Activated naive CD4-positive, alpha-beta T cell treated with anti-CD3 and anti-CD28 coated beads for 36 hours (primary cell): ENCODE measurements at regions of chr17 and their contacts with region 1.

Region 1: GRCh38 chr17:7614422-7615264 is at the start of gene FXR2:
- DNase-seq: peak; percentile 100
- H3K4me3 Mint-ChIP-seq: peak within 1 kb of the TSS; percentile 83
- H3K27ac Mint-ChIP-seq: peak within 1 kb of the TSS; percentile 84
- H3K4me1 Mint-ChIP-seq: peaks cover 32% of the 10 kb centered on the region
- H3K27me3 Mint-ChIP-seq: no peaks in the 10 kb centered on the region
- total RNA-seq, gene FXR2: 29.7 to 36.8 TPM

Region 2: GRCh38 chr17:7403977-7404736 is 210.5 kb before region 1 on chr17 and contains the start of gene TMEM256:
- CTCF ChIA-PET with region 1: no interaction called
- intact Hi-C with region 1: loop called (anchors 1 kb)
- DNase-seq: peak; percentile 99
- H3K4me3 Mint-ChIP-seq: peak within 1 kb of the TSS; percentile 93
- H3K27ac Mint-ChIP-seq: peak within 1 kb of the TSS; percentile 93
- H3K4me1 Mint-ChIP-seq: peaks cover 19% of the 10 kb centered on the region
- H3K27me3 Mint-ChIP-seq: peaks cover 2% of the 10 kb centered on the region
- total RNA-seq, gene TMEM256: 65.6 to 66.3 TPM

Region 3: GRCh38 chr17:7454980-7455379 is 159.7 kb before region 1 on chr17:
- CTCF ChIA-PET with region 1: no interaction called
- intact Hi-C with region 1: loop called (anchors 1 kb)
- DNase-seq: no peak
- H3K4me3 Mint-ChIP-seq: peak overlapping the region; percentile 84
- H3K27ac Mint-ChIP-seq: peak overlapping the region; percentile 83
- H3K4me1 Mint-ChIP-seq: peaks cover 17% of the 10 kb centered on the region
- H3K27me3 Mint-ChIP-seq: no peaks in the 10 kb centered on the region

Region 4: GRCh38 chr17:7583253-7584109 is 31.2 kb before region 1 on chr17 and contains the start of gene MPDU1:
- CTCF ChIA-PET with region 1: interaction called, 8 read pairs
- intact Hi-C with region 1: loop called (anchors 1 kb)
- DNase-seq: peak; percentile 96
- H3K4me3 Mint-ChIP-seq: peak within 1 kb of the TSS; percentile 95
- H3K27ac Mint-ChIP-seq: peak within 1 kb of the TSS; percentile 100
- H3K4me1 Mint-ChIP-seq: peaks cover 58% of the 10 kb centered on the region
- H3K27me3 Mint-ChIP-seq: no peaks in the 10 kb centered on the region
- total RNA-seq, gene MPDU1: 48.8 to 53.5 TPM

Region 5: GRCh38 chr17:7627250-7628121 is 12.8 kb after region 1 on chr17 and contains the start of gene SAT2:
- CTCF ChIA-PET with region 1: interaction called, 9 read pairs
- intact Hi-C with region 1: loop called (anchors 1 kb)
- DNase-seq: peak; percentile 86
- H3K4me3 Mint-ChIP-seq: peak within 1 kb of the TSS; percentile 88
- H3K27ac Mint-ChIP-seq: peak within 1 kb of the TSS; percentile 30
- H3K4me1 Mint-ChIP-seq: peaks cover 7% of the 10 kb centered on the region
- H3K27me3 Mint-ChIP-seq: no peaks in the 10 kb centered on the region
- total RNA-seq, gene SAT2: 14.3 to 16.9 TPM

Region 6: DNA sequence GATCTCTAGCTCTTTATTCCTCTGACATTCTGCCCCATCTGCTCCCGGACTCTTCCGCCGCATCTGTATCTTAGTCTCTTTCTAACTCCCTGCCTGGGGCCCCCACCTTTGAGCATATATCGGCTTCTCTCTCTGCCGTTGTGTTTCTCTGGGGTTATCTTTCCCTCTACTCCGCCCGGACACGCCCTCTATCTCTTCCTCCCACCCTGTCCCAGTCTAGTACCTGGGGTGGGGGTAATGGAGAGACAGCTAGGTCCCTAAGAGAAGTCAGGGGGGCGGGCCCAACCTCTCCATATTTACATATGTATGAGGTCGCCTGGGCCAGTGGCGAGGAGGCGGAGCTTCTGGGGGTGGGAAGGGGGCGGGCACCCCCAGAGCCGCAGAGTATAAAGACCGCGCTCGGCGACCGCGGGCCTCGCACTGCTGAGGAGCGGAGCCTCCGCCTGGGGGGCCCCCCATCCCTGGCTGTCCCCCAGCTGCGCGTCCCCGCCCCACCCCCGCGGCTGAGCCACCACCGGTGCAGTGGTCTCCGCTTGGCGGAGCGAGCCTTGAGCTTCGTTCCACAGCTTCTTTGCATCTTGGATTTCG is 36.0 kb after region 1 on chr17 and contains the start of gene ATP1B2:
- CTCF ChIA-PET with region 1: no interaction called
- intact Hi-C with region 1: loop called (anchors 1 kb)
- DNase-seq: peak; percentile 78
- H3K4me3 Mint-ChIP-seq: peak within 1 kb of the TSS; percentile 62
- H3K27ac Mint-ChIP-seq: no peak within 1 kb of the TSS
- H3K4me1 Mint-ChIP-seq: peaks cover 18% of the 10 kb centered on the region
- H3K27me3 Mint-ChIP-seq: peaks cover 22% of the 10 kb centered on the region
- total RNA-seq, gene ATP1B2: 0.14 to 0.30 TPM

Region 7: GRCh38 chr17:8354236-8354635 is 739.6 kb after region 1 on chr17:
- CTCF ChIA-PET with region 1: no interaction called
- intact Hi-C with region 1: no loop called
- DNase-seq: no peak
- H3K4me3 Mint-ChIP-seq: no peak overlapping the region
- H3K27ac Mint-ChIP-seq: no peak overlapping the region
- H3K4me1 Mint-ChIP-seq: no peaks in the 10 kb centered on the region
- H3K27me3 Mint-ChIP-seq: peaks cover 3% of the 10 kb centered on the region